ENCODE measurements at regions of chr1 and their contacts with region 1.

Region 1: GRCh38 chr1:24415334-24415909 is at the start of gene NIPAL3:
- DNase-seq: peak; percentile 99
- ATAC-seq: peak; percentile 94
- H3K4me3 Mint-ChIP-seq: peak within 1 kb of the TSS; percentile 93
- H3K27ac Mint-ChIP-seq: peak within 1 kb of the TSS; percentile 89
- H3K4me1 Mint-ChIP-seq: peaks cover 36% of the 10 kb centered on the region
- H3K27me3 Mint-ChIP-seq: no peaks in the 10 kb centered on the region
- CTCF ChIP-seq: peak; percentile 86
- total RNA-seq, gene NIPAL3: 11.2 to 11.3 TPM (median 11.2 TPM) in 3 replicates

Region 2: DNA sequence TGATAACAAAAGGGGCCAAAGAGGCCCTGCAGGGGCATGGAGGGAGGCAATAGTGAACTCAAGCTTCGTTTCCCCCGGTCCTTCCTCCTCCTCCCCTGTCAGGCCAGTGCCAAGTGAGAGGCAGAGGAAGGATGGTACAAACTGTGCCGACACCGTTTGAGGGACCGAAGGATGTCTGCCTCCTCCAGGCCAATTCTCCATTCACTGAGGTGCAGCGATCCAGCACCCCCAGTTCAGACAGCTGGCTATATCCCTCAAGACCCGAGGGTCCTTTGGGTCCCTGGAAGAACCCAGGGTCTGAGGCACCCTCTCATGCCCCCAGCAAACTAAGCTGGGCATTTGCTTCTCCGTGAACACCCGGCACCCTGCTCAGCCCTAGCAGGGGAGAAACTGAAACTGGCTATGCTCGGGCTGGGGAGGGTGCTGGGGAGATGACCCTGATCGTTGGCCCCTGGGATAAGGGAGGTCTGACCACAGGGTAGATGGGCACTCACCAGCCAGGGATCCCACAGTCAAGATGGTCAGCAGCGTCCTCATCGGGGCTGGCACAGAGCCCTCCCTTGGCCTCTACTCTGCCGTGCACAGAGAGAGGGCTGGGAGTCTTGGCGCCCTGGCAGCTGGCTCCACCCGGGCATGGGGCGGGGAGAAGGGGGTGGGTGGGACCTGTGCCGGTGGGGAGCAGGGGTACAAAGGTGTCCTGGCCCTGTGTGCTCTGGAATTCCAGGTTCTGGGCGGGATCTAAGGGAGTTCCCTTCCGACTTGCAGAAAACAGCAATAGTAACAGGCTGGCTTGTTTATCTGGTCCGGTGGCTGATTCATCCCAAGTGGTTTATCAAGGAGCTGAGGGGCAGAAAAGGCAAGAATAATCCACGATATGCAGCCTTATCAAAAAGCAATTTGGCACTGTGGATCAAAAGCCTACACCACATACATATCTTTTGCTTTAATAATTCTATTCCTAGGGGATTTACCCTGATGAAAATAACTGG is 272.6 kb before region 1 on chr1 and contains the start of gene IL22RA1:
- CTCF ChIA-PET with region 1: no interaction called
- POLR2A ChIA-PET with region 1: no interaction called
- DNase-seq: no peak
- ATAC-seq: peak; percentile 39
- H3K4me3 Mint-ChIP-seq: no peak within 1 kb of the TSS
- H3K27ac Mint-ChIP-seq: no peak within 1 kb of the TSS
- H3K4me1 Mint-ChIP-seq: no peaks in the 10 kb centered on the region
- H3K27me3 Mint-ChIP-seq: no peaks in the 10 kb centered on the region; the same call in 1 of the 2 replicates
- CTCF ChIP-seq: no peak
- total RNA-seq, gene IL22RA1: 0.14 to 0.28 TPM (median 0.25 TPM) in 3 replicates

Region 3: DNA sequence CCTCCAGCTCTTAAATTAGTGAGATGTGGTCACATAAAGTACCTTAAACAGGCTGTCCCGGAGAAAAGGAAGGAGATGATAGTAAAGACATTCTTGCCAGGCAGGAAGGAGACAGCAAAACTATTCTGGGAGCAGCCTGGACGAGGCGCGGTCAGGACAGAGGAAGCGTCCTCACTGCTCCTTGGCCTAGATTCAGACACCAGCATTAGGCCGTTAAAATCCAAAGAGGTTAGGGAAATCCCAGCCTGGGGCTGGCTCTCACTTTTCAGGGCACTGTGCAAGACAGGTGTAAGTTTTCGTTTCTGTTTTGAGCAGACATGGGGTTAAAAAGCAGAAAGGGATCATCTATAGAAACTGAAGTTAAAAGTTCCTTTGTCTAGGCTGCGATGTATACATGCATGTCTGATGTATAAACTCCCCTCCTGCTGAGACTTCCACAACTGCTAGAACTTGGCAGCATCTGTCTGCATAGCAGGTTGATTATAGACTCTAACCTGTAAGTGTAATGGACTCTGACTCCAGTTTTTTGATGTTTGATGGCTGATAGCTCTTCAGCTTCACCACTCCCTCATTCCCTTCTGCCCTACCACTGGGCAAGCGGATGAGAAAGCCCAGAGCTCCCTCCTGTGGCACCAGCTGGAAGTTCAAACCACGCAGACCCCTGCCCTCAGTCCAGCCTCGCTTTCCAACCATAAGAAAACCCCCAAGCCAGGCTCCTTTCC is 23.4 kb before region 1 on chr1:
- CTCF ChIA-PET with region 1: interaction called, 44 read pairs
- POLR2A ChIA-PET with region 1: no interaction called
- DNase-seq: peak; percentile 84
- ATAC-seq: peak; percentile 91
- H3K4me3 Mint-ChIP-seq: no peak overlapping the region
- H3K27ac Mint-ChIP-seq: no peak overlapping the region
- H3K4me1 Mint-ChIP-seq: peaks cover 34% of the 10 kb centered on the region
- H3K27me3 Mint-ChIP-seq: no peaks in the 10 kb centered on the region
- CTCF ChIP-seq: peak; percentile 72

Region 4: DNA sequence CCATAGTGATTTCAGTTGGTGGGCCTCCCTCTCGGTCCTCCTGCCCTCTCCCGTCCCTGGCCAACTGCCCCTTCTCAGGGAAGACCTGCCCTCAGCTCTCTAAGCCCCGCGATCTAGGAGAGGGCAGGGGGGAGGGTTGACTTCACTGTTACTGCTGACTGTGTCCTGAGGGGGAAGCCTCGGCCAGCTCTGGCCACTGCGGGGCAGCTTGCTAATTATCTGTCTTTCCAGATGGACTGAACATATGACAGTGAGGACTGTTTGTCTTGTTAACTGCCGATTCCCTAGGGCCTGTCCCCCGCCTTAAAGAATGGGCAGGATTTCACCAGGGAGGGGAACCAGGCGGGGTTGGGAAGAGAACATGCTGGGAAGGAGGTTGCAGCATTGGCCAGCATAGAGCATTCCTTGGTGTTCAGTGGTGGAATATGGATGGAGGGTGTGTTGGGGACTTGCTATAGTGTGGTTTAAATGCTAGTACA is 23.0 kb after region 1 on chr1:
- CTCF ChIA-PET with region 1: interaction called, 15 read pairs
- POLR2A ChIA-PET with region 1: no interaction called
- DNase-seq: no peak
- ATAC-seq: peak; percentile 75
- H3K4me3 Mint-ChIP-seq: no peak overlapping the region
- H3K27ac Mint-ChIP-seq: peak overlapping the region; percentile 53; the same call in 1 of the 2 replicates
- H3K4me1 Mint-ChIP-seq: peaks cover 14% of the 10 kb centered on the region
- H3K27me3 Mint-ChIP-seq: no peaks in the 10 kb centered on the region
- CTCF ChIP-seq: no peak

Region 5: GRCh38 chr1:24481101-24481500 is 65.7 kb after region 1 on chr1:
- CTCF ChIA-PET with region 1: interaction called, 13 read pairs
- POLR2A ChIA-PET with region 1: no interaction called
- DNase-seq: no peak
- ATAC-seq: peak; percentile 70
- H3K4me3 Mint-ChIP-seq: no peak overlapping the region
- H3K27ac Mint-ChIP-seq: peak overlapping the region; percentile 62
- H3K4me1 Mint-ChIP-seq: peaks cover 20% of the 10 kb centered on the region
- H3K27me3 Mint-ChIP-seq: no peaks in the 10 kb centered on the region
- CTCF ChIP-seq: no peak

Region 6: GRCh38 chr1:24502709-24503058 is 87.3 kb after region 1 on chr1 and contains the start of gene RCAN3:
- CTCF ChIA-PET with region 1: interaction called, 30 read pairs
- POLR2A ChIA-PET with region 1: interaction called, 3 read pairs
- DNase-seq: peak; percentile 88
- ATAC-seq: peak; percentile 85
- H3K4me3 Mint-ChIP-seq: peak within 1 kb of the TSS; percentile 86
- H3K27ac Mint-ChIP-seq: peak within 1 kb of the TSS; percentile 78
- H3K4me1 Mint-ChIP-seq: peaks cover 54% of the 10 kb centered on the region
- H3K27me3 Mint-ChIP-seq: peaks cover 11% of the 10 kb centered on the region
- CTCF ChIP-seq: no peak
- total RNA-seq, gene RCAN3: 16.9 to 23.3 TPM (median 16.9 TPM) in 3 replicates

Region 7: GRCh38 chr1:24541711-24542346 is 126.4 kb after region 1 on chr1:
- CTCF ChIA-PET with region 1: interaction called, 18 read pairs
- POLR2A ChIA-PET with region 1: no interaction called
- DNase-seq: peak; percentile 57
- ATAC-seq: no peak
- H3K4me3 Mint-ChIP-seq: no peak overlapping the region
- H3K27ac Mint-ChIP-seq: peak overlapping the region; percentile 57; the same call in 1 of the 2 replicates
- H3K4me1 Mint-ChIP-seq: peaks cover 26% of the 10 kb centered on the region
- H3K27me3 Mint-ChIP-seq: no peaks in the 10 kb centered on the region
- CTCF ChIP-seq: peak; percentile 92